Cardiac septum (tissue), 1 donor: ENCODE measurements at regions of chr17 and their contacts with region 1.

Region 1: GRCh38 chr17:40287494-40288369 is at the start of gene CDC6:
- DNase-seq: peak; percentile 99
- total RNA-seq, gene CDC6: 0.75 TPM

Region 2: GRCh38 chr17:40019140-40019991 is 268.4 kb before region 1 on chr17:
- intact Hi-C with region 1: loop called (anchors 10 kb)
- DNase-seq: no peak

Region 3: GRCh38 chr17:40121181-40122135 is 166.3 kb before region 1 on chr17 and contains the start of gene MSL1:
- intact Hi-C with region 1: loop called (anchors 5 kb)
- DNase-seq: peak; percentile 96
- total RNA-seq, gene MSL1: 53.7 TPM

Region 4: DNA sequence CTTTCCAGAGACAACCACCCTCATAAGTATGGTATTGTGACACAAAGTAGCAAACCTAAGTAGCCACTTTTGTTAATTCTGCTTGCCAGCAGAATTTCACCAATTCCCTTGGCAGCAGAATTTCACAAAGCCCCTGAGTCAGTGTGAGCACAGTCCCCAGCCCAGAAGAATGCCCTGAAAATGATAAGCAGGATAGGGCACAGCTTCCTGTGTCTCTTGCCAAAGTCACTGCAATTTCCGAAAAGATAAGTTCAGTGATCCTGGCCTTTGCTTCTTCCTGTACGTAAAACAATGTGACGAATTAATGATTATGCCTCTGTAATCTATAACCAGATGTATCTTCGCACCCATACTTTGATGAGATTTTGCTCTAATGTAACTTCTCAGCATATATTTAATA is 84.6 kb before region 1 on chr17:
- intact Hi-C with region 1: loop called (anchors 2 kb)
- DNase-seq: no peak

Region 5: GRCh38 chr17:40219073-40219860 is 68.5 kb before region 1 on chr17 and contains the start of gene WIPF2:
- intact Hi-C with region 1: loop called (anchors 5 kb)
- DNase-seq: peak; percentile 98
- total RNA-seq, gene WIPF2: 13.3 TPM

Region 6: GRCh38 chr17:40647624-40648383 is 360.1 kb after region 1 on chr17 and contains the start of gene SMARCE1:
- intact Hi-C with region 1: no loop called
- DNase-seq: peak; percentile 87
- total RNA-seq, gene SMARCE1: 77.7 TPM